Activated CD8-positive, alpha-beta memory T cell treated with anti-CD3 and anti-CD28 coated beads, Interleukin-2, amount 10 ng/mL, durations not matched to agents 7 days and 5 days (primary cell): ENCODE measurements at regions of chr1 and their contacts with region 1.

Region 1: DNA sequence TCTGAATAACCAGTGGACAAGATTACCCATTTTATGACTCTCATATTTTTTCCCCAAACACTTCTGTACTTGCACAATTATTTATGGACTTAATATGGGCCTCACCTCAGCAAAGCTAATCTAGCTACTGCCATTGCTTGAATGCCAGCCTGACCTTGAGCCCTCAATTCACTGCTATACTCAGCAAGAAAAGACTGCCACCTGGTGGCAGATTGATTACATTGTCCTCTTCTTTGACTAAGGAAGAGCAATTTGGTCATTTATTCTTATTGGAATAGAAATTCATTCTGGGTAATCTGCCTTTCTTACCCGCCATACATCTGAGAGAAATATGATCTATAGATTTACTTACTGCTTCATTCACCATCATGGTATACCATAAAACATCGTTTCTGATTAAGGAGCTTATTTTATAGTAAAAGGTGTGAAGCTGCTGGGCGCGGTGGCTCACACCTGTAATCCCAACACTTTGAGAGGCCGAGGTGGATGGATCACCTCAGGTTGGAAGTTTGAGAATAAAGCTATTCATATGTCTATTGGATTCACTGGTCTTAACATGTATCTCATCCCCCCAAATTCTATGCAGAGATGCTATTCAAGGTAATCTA is 32.9 kb upstream of the DIPK1A start:
- DNase-seq: peak; percentile 85
- ATAC-seq: peak; percentile 87
- H3K4me3 Mint-ChIP-seq: no peak overlapping the region
- H3K27ac Mint-ChIP-seq: peak overlapping the region; percentile 11
- H3K4me1 Mint-ChIP-seq: peaks cover 54% of the 10 kb centered on the region
- H3K27me3 Mint-ChIP-seq: no peaks in the 10 kb centered on the region

Region 2: DNA sequence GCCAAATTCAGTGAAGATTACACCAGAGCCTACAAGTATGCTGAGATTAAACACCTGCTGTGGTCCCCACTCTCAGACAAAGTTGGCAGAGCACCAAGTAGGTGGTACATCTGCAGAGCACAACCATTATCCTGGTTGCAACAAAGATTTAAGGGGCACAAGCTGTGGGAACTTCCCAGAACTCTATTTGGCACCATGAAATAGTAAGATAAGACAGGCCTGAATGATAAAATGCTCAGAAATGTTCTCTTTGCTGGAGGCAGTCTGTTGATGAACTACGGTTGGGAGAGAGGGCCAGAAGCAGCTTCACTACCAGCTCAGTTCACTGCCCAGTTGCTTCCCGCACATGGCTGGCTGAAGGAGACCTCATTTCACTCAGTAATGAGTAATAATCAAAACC is 142.5 kb before region 1 on chr1:
- CTCF ChIA-PET with region 1: interaction called, 90 read pairs
- DNase-seq: no peak
- ATAC-seq: no peak
- H3K4me3 Mint-ChIP-seq: no peak overlapping the region
- H3K27ac Mint-ChIP-seq: no peak overlapping the region
- H3K4me1 Mint-ChIP-seq: peaks cover 6% of the 10 kb centered on the region
- H3K27me3 Mint-ChIP-seq: no peaks in the 10 kb centered on the region

Region 3: DNA sequence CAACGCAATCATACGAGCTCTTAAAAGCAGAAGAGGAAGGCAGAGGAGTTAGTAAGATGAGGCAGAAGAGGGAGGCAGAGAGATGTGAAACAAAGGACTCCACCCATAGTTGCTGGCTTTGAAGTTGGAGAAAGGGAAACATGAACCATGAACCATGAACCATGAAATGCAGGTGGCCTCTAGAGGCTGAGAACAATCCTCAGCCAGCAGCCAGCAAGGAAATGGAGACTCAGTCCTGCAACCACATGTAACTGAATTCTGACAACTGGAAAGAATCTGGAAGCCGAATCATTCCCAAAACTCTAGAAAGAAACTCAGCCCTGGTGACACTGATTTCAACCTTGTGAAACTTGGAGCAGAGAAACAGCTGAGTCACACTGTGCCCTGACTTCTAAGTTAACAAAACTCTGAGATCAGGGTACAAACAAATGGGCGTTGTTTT is 43.0 kb before region 1 on chr1:
- CTCF ChIA-PET with region 1: interaction called, 483 read pairs
- DNase-seq: no peak
- ATAC-seq: peak; percentile 40
- H3K4me3 Mint-ChIP-seq: no peak overlapping the region
- H3K27ac Mint-ChIP-seq: no peak overlapping the region
- H3K4me1 Mint-ChIP-seq: peaks cover 36% of the 10 kb centered on the region
- H3K27me3 Mint-ChIP-seq: no peaks in the 10 kb centered on the region

Region 4: DNA sequence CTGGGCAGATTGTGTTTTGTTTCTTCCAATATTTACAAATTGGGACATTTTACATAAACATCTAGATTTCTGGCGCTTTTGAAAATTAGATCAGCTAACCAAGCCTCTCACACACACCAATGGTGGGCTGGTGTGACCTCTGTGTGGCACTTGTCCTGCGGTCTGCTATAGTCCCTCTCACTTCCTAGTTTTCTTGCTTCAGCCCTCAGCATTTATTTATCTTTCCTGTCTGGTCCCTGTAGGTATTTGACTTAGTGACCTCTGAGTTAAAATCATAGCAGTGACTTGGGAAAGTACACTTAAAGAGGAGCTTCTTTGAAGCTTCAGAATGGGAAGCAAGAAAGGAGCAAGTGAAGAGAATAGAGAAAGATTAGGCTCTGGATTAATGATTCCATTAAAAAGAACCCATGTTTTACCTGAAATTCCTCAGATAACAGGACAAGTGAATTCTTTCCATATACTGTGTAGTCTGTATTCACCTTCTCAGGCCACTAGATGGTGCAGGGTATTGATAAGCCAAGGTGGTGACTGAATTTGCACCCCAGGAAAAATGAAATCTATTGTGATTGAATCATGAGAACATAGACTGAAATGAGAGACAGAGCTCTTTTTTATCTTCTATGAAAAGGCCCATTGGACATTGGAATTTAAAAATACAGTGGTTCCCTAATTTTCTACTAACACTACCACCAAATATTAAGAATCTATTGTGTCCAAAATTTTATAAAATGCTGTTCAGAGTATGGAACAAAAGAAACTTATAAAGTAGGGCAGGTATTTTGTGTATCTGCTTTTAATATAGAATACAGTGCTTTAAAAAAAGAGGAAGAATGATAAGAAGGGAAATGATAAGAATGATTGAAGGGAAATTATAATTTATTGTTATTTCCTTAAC is 25.8 kb before region 1 on chr1:
- CTCF ChIA-PET with region 1: interaction called, 483 read pairs
- DNase-seq: no peak
- ATAC-seq: peak; percentile 74
- H3K4me3 Mint-ChIP-seq: no peak overlapping the region
- H3K27ac Mint-ChIP-seq: no peak overlapping the region
- H3K4me1 Mint-ChIP-seq: peaks cover 21% of the 10 kb centered on the region
- H3K27me3 Mint-ChIP-seq: no peaks in the 10 kb centered on the region

Region 5: GRCh38 chr1:93004566-93005251 is 10.5 kb after region 1 on chr1:
- CTCF ChIA-PET with region 1: interaction called, 14 read pairs
- DNase-seq: no peak
- ATAC-seq: no peak
- H3K4me3 Mint-ChIP-seq: no peak overlapping the region
- H3K27ac Mint-ChIP-seq: no peak overlapping the region
- H3K4me1 Mint-ChIP-seq: peaks cover 2% of the 10 kb centered on the region
- H3K27me3 Mint-ChIP-seq: peaks cover 29% of the 10 kb centered on the region

Region 6: GRCh38 chr1:93186667-93187066 is 192.5 kb after region 1 on chr1:
- CTCF ChIA-PET with region 1: no interaction called
- DNase-seq: no peak
- ATAC-seq: no peak
- H3K4me3 Mint-ChIP-seq: no peak overlapping the region
- H3K27ac Mint-ChIP-seq: no peak overlapping the region
- H3K4me1 Mint-ChIP-seq: peaks cover 54% of the 10 kb centered on the region
- H3K27me3 Mint-ChIP-seq: no peaks in the 10 kb centered on the region